ENCODE measurements at regions of chrX and their contacts with region 1.

Region 1: GRCh38 chrX:21479695-21480270 is 105.6 kb downstream of the CNKSR2 start:
- DNase-seq: peak in 2 of 9 experiments; percentile 44 to 57
- ATAC-seq: peak; percentile 52
- H3K4me3 ChIP-seq: no peak overlapping the region
- H3K4me3 Mint-ChIP-seq: no peak overlapping the region
- H3K27ac ChIP-seq: no peak overlapping the region
- H3K27ac Mint-ChIP-seq: no peak overlapping the region
- H3K4me1 ChIP-seq: peaks cover 3% of the 10 kb centered on the region
- H3K4me1 Mint-ChIP-seq: peaks cover 10% of the 10 kb centered on the region
- H3K27me3 ChIP-seq: no peaks in the 10 kb centered on the region
- H3K27me3 Mint-ChIP-seq: no peaks in the 10 kb centered on the region
- CTCF ChIP-seq: peak; percentile 58

Region 2: DNA sequence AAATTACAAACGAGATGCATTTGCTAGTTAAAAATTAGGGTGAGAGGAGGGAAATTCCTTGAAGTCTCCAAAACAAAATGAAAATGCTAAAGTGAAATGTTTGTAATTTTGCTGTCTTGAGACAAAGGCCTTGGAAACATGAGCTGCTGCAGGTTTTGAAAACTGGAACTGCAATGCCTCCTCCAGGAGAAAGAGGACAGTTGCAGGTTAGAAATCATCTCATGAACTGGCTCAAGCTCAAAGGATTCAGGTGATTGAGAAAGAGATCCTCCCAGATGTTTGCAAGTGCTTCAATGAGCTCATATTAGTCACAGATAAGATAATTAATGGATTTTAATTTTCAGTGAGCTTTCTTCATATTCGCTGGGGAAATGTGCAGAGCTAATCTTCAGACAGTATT is 245.7 kb after region 1 on chrX:
- CTCF ChIA-PET with region 1: interaction called, 3 read pairs
- POLR2A ChIA-PET with region 1: no interaction called
- intact Hi-C with region 1: loop called in 1 of 2 experiments (anchors 10 kb)
- DNase-seq: peak in 2 of 9 experiments; percentile 11 to 27
- ATAC-seq: no peak
- H3K4me3 ChIP-seq: no peak overlapping the region
- H3K4me3 Mint-ChIP-seq: no peak overlapping the region
- H3K27ac ChIP-seq: no peak overlapping the region
- H3K27ac Mint-ChIP-seq: no peak overlapping the region
- H3K4me1 ChIP-seq: no peaks in the 10 kb centered on the region
- H3K4me1 Mint-ChIP-seq: no peaks in the 10 kb centered on the region
- H3K27me3 ChIP-seq: no peaks in the 10 kb centered on the region
- H3K27me3 Mint-ChIP-seq: peaks cover 6% of the 10 kb centered on the region
- CTCF ChIP-seq: no peak